Activated CD4-positive, alpha-beta T cell treated with anti-CD3 and anti-CD28 coated beads for 36 hours (primary cell): ENCODE measurements at regions of chr5 and their contacts with region 1.

Region 1: DNA sequence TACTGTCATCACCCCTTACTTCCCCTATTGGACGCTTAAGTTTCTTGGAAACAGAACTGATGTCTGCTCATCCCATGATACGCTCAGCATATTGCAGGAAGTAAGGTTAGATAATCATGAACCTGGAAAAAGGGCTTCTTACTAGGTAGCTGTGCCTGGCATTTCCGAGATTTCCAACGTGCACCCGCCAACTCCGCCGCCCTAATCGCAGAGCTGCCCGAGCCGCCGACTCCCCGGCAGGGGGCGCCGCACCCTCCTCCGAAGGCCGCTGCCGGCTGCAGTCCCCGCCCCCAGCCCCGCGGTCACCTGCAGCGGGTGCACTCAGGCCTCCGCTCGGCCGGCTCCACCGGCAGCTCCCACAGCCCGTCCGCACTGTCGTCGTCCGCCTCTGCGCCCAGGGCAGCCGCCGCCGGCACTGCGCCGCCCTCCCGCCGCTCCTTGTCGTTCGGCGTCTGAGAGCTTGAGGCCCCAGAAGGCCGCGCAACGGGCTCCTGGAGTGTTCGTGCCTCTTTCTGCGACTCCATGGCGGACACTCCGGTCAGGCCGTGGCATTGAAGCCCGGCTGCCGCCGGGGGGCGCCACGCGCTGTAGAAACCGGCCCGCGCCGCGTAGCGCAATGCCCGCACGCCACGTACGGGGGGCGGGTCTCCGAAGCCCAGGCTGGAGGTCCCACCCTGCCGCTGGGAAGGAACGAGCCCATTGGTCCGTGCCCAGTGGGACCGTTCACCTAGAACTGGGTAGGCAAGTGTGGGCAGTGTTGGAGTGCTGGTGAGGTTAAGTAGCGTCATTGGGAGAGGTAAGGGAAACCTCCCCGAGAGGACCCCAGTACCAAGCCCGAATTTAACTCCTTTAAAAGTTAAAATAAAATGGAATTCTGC is at the start of gene DTWD2:
- DNase-seq: peak; percentile 96
- ATAC-seq: peak; percentile 90
- H3K4me3 Mint-ChIP-seq: peak within 1 kb of the TSS; percentile 63
- H3K27ac Mint-ChIP-seq: peak within 1 kb of the TSS; percentile 34
- H3K4me1 Mint-ChIP-seq: peaks cover 23% of the 10 kb centered on the region
- H3K27me3 Mint-ChIP-seq: peaks cover 1% of the 10 kb centered on the region
- total RNA-seq, gene DTWD2: 3.6 to 4.5 TPM

Region 2: GRCh38 chr5:119031905-119032304 is 43.7 kb after region 1 on chr5:
- CTCF ChIA-PET with region 1: interaction called, 4 read pairs
- POLR2A ChIA-PET with region 1: no interaction called
- intact Hi-C with region 1: loop called in 1 of 2 experiments (anchors 2 kb)
- DNase-seq: peak; percentile 20
- ATAC-seq: no peak
- H3K4me3 Mint-ChIP-seq: no peak overlapping the region
- H3K27ac Mint-ChIP-seq: peak overlapping the region; percentile 48
- H3K4me1 Mint-ChIP-seq: peaks cover 21% of the 10 kb centered on the region
- H3K27me3 Mint-ChIP-seq: no peaks in the 10 kb centered on the region

Region 3: GRCh38 chr5:119255571-119256356 is 267.5 kb after region 1 on chr5:
- CTCF ChIA-PET with region 1: interaction called, 5 read pairs
- POLR2A ChIA-PET with region 1: no interaction called
- intact Hi-C with region 1: loop called (anchors 1 kb)
- DNase-seq: peak; percentile 22
- ATAC-seq: peak; percentile 56
- H3K4me3 Mint-ChIP-seq: no peak overlapping the region
- H3K27ac Mint-ChIP-seq: no peak overlapping the region
- H3K4me1 Mint-ChIP-seq: peaks cover 12% of the 10 kb centered on the region
- H3K27me3 Mint-ChIP-seq: no peaks in the 10 kb centered on the region

Region 4: GRCh38 chr5:119355685-119356611 is 367.7 kb after region 1 on chr5 and contains the start of gene TNFAIP8:
- CTCF ChIA-PET with region 1: interaction called, 3 read pairs
- POLR2A ChIA-PET with region 1: interaction called, 5 read pairs
- intact Hi-C with region 1: loop called in 1 of 2 experiments (anchors 5 kb)
- DNase-seq: peak; percentile 91
- ATAC-seq: peak; percentile 65
- H3K4me3 Mint-ChIP-seq: peak within 1 kb of the TSS; percentile 98
- H3K27ac Mint-ChIP-seq: peak within 1 kb of the TSS; percentile 99
- H3K4me1 Mint-ChIP-seq: peaks cover 62% of the 10 kb centered on the region
- H3K27me3 Mint-ChIP-seq: no peaks in the 10 kb centered on the region
- total RNA-seq, gene TNFAIP8: 166 to 171 TPM

Region 5: DNA sequence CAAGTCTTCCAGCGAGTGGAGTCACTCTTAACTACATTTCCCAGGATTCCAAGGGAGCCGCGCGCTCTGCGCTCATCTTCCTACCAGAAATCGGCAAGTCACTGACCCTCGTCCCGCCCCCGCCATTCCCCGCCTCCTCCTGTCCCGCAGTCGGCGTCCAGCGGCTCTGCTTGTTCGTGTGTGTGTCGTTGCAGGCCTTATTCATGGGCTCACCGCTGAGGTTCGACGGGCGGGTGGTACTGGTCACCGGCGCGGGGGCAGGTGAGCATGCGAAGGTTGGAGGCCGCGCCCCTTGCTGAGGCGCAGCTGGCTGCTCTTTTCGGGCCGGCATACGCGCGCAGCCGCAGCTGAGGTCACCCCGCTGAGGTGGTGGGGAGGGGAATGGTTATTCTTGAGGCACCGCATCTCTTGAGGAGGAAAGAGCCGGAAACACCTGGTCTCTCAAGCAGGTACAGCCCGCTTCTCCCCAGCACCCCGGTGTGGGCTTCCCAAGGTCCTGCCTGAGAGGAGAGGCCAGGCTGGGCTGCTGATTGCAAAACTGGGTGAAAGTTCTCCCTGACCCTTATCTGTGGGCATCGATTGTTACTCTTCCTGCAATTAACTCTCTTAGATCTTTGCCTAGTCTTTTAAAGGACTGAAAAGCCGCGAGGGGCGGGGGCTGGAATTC is 464.3 kb after region 1 on chr5 and contains the start of gene HSD17B4:
- CTCF ChIA-PET with region 1: interaction called, 28 read pairs
- POLR2A ChIA-PET with region 1: no interaction called
- intact Hi-C with region 1: loop called in 1 of 2 experiments (anchors 1 kb)
- DNase-seq: peak; percentile 90
- ATAC-seq: peak; percentile 96
- H3K4me3 Mint-ChIP-seq: peak within 1 kb of the TSS; percentile 86
- H3K27ac Mint-ChIP-seq: peak within 1 kb of the TSS; percentile 87
- H3K4me1 Mint-ChIP-seq: peaks cover 16% of the 10 kb centered on the region
- H3K27me3 Mint-ChIP-seq: peaks cover 3% of the 10 kb centered on the region
- total RNA-seq, gene HSD17B4: 92.3 to 113 TPM

Region 6: GRCh38 chr5:120457839-120458507 is 1469.7 kb after region 1 on chr5:
- CTCF ChIA-PET with region 1: no interaction called
- POLR2A ChIA-PET with region 1: no interaction called
- intact Hi-C with region 1: loop called (anchors 5 to 10 kb)
- DNase-seq: peak; percentile 67
- ATAC-seq: peak; percentile 64
- H3K4me3 Mint-ChIP-seq: peak overlapping the region; percentile 18
- H3K27ac Mint-ChIP-seq: no peak overlapping the region
- H3K4me1 Mint-ChIP-seq: peaks cover 2% of the 10 kb centered on the region
- H3K27me3 Mint-ChIP-seq: peaks cover 11% of the 10 kb centered on the region